Left ventricle myocardium inferior (tissue), 1 donor: ENCODE measurements at regions of chr2 and their contacts with region 1.

Region 1: GRCh38 chr2:6917071-6917760 is at the start of gene RNF144A:
- DNase-seq: peak; percentile 71
- H3K4me3 ChIP-seq: peak within 1 kb of the TSS; percentile 91
- H3K27ac ChIP-seq: peak within 1 kb of the TSS; percentile 85
- H3K4me1 ChIP-seq: peaks cover 47% of the 10 kb centered on the region
- H3K27me3 ChIP-seq: no peaks in the 10 kb centered on the region
- CTCF ChIP-seq: peak; percentile 63
- total RNA-seq, gene RNF144A: 17.9 TPM

Region 2: DNA sequence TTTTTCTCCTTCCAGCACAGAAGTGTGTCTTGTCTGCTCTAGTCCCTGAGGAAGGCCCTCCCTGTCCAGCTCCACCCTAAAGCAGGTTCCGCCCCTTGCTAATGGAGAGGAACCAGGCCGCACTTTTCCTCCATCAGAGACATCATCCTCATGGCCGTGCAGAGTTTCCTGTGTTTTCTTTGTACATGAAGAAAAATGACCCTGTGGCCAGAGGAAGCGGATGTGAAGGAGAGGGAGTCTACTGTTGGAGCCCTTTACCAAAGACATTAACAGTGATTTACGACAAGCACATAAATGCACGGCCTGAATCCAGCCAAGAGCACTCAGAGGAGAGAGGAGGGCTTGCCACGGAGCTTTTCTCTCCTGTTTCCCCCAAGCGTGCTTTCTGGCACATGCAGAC is 109.5 kb after region 1 on chr2:
- intact Hi-C with region 1: loop called (anchors 5 kb)
- DNase-seq: no peak
- H3K4me3 ChIP-seq: no peak overlapping the region
- H3K27ac ChIP-seq: peak overlapping the region; percentile 86
- H3K4me1 ChIP-seq: peaks cover 81% of the 10 kb centered on the region
- H3K27me3 ChIP-seq: no peaks in the 10 kb centered on the region
- CTCF ChIP-seq: no peak